ENCODE measurements at regions of chr20 and their contacts with region 1.

Region 1: GRCh38 chr20:62571667-62572344 is 70.5 kb upstream of the SLCO4A1 start:
- DNase-seq: peak; percentile 63 to 79
- H3K4me3 ChIP-seq: no peak overlapping the region
- H3K4me3 Mint-ChIP-seq: no peak overlapping the region
- H3K27ac Mint-ChIP-seq: no peak overlapping the region
- H3K4me1 ChIP-seq: no peaks in the 10 kb centered on the region
- H3K4me1 Mint-ChIP-seq: no peaks in the 10 kb centered on the region
- H3K27me3 ChIP-seq: no peaks in the 10 kb centered on the region
- H3K27me3 Mint-ChIP-seq: peaks cover 34% of the 10 kb centered on the region
- CTCF ChIP-seq: peak in 1 of 2 experiments; percentile 32

Region 2: DNA sequence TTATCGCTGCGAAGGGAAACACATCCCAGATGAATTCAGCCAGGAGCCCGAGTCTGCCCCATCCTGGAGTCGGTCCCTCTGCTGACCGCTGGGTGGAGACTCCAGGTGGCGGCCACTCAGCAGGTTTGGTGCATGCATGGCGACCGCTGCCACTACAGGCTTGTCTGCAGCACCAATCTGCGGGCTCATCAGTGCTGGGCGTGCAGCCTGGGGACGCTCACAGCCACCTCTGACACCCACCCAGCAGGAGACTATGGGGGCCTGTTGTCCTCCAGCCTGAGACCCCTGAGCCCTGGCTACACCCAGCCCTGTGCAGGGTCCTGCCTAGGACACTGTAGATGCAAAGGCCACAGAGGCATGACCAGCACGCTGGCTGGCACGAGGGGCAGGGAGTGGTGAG is 55.5 kb before region 1 on chr20:
- CTCF ChIA-PET with region 1: no interaction called
- POLR2A ChIA-PET with region 1: no interaction called
- intact Hi-C with region 1: no loop called
- DNase-seq: peak in 1 of 2 experiments; percentile 60
- H3K4me3 ChIP-seq: no peak overlapping the region
- H3K4me3 Mint-ChIP-seq: no peak overlapping the region
- H3K27ac Mint-ChIP-seq: no peak overlapping the region
- H3K4me1 ChIP-seq: peaks cover 9% of the 10 kb centered on the region
- H3K4me1 Mint-ChIP-seq: peaks cover 6% of the 10 kb centered on the region
- H3K27me3 ChIP-seq: no peaks in the 10 kb centered on the region
- H3K27me3 Mint-ChIP-seq: no peaks in the 10 kb centered on the region
- CTCF ChIP-seq: peak; percentile 38 to 74

Region 3: DNA sequence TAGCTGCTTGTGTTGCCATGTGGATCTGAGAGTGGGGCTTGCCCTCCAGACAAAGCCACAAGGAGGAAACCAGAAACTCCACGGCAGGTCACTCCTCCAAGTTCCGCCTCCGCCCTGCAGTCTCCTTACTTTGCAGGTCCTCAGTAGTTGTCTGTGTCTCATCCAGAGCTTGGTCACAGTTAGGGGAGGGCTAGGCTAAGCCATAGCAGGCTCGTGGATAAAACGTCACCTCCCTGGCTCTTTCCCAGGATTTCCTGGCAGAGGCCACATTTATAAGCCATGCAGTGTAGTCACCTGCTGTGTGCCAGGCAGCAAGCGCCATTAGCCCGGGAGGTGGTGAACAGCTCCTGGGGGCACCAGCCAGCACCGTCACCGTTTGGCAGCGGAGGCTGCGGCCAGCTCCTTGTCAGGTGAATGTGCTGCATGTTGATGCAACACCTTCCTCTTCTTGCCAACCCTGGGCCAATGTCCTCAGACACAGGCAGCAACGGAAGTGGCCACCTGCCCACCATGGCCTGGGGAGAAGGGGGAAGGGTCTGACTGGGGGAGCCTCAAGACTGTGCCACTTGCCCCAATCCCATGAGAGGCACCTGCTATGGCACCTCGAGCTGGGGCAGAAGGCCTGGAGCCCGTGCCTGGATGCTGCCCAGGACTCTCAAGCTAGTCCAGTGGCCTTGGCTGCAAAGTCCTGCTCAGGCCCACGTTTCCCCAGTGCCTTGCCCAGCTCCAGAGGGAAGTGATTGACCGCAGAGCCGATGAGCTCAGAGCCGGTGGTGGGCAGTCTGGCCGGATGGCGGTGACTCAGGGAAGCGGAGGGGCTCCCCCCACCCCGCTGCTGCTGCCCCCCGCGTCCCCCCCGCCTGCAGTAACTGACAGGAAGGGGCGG is 31.5 kb after region 1 on chr20:
- CTCF ChIA-PET with region 1: interaction called, 14 read pairs
- POLR2A ChIA-PET with region 1: no interaction called
- intact Hi-C with region 1: no loop called
- DNase-seq: no peak
- H3K4me3 ChIP-seq: no peak overlapping the region
- H3K4me3 Mint-ChIP-seq: no peak overlapping the region
- H3K27ac Mint-ChIP-seq: no peak overlapping the region
- H3K4me1 ChIP-seq: peaks cover 16% of the 10 kb centered on the region
- H3K4me1 Mint-ChIP-seq: peaks cover 7% of the 10 kb centered on the region
- H3K27me3 ChIP-seq: no peaks in the 10 kb centered on the region
- H3K27me3 Mint-ChIP-seq: peaks cover 17% of the 10 kb centered on the region
- CTCF ChIP-seq: no peak